Prostate gland (tissue), 2 donors: ENCODE measurements at regions of chr18 and their contacts with region 1.

Region 1: DNA sequence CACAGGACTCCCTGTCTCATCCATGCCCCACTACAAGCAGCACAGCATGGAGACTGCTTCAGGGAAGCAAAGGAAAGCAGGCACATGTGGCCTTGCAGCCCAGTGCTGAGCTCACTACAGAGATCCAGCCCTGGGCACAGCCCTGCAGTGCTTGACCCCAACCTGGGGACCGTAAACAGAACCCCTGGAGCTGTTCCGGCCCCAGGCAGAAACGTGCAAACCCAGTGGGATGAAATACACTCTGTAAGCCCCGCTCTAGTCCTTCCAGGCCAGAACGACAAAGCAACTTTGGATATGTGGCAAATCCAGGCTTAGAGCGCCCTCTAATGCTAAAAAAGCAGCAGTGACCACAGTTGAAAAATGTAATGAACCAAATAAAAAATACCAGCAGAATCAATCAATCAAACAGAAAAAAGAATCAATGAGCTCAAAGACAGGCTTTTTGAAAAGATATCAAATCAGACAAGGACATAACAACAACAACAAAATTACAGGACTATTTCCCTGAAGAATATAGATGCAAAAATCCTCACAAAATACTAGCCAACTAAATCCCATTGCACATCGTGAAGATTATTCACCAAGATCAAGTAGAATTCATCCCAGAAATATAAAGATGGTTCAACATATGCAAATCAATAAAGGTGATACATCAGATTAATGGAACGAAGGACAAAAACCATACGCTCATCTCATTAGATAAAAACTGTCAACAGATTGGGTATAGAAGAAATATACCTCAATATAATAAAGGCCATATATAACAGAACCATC is 45.6 kb downstream of the ZNF519 start:
- DNase-seq: no peak
- H3K4me3 ChIP-seq: no peak overlapping the region
- H3K27ac ChIP-seq: no peak overlapping the region
- H3K4me1 ChIP-seq: no peaks in the 10 kb centered on the region
- H3K27me3 ChIP-seq: no peaks in the 10 kb centered on the region
- CTCF ChIP-seq: peak; percentile 12 to 73 (median 59)
- POLR2A ChIP-seq: no peak

Region 2: GRCh38 chr18:13823707-13824395 is 262.8 kb before region 1 on chr18 and contains the start of gene MC5R:
- intact Hi-C with region 1: loop called (anchors 5 kb)
- DNase-seq: peak; percentile 30
- H3K4me3 ChIP-seq: peak within 1 kb of the TSS; percentile 17 to 31
- H3K27ac ChIP-seq: no peak within 1 kb of the TSS
- H3K4me1 ChIP-seq: no peaks in the 10 kb centered on the region
- H3K27me3 ChIP-seq: no peaks in the 10 kb centered on the region
- CTCF ChIP-seq: peak; percentile 62 to 95 (median 88)
- POLR2A ChIP-seq: no peak
- total RNA-seq, gene MC5R: not detected

Region 3: DNA sequence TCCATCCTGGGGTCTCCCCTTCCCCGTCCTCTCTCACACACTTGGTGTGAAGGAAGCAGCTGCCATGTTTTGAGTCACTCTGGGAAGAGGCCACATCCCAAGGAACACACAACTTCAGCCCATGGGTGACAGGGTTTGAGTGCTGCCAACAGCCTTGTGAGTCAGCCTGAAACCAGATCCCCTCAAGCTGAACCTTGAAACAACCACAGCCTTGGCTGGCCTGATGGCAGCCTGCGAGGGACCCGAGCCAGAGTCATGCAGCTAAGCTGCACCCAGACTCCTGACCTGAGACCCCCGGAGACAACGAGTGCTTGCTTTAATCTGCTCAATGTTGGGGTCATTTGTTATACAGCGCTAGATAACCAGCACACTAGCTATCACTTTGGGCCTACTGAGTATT is 152.0 kb before region 1 on chr18:
- intact Hi-C with region 1: no loop called
- DNase-seq: no peak
- H3K4me3 ChIP-seq: no peak overlapping the region
- H3K27ac ChIP-seq: no peak overlapping the region
- H3K4me1 ChIP-seq: no peaks in the 10 kb centered on the region
- H3K27me3 ChIP-seq: no peaks in the 10 kb centered on the region
- CTCF ChIP-seq: no peak
- POLR2A ChIP-seq: no peak

Region 4: DNA sequence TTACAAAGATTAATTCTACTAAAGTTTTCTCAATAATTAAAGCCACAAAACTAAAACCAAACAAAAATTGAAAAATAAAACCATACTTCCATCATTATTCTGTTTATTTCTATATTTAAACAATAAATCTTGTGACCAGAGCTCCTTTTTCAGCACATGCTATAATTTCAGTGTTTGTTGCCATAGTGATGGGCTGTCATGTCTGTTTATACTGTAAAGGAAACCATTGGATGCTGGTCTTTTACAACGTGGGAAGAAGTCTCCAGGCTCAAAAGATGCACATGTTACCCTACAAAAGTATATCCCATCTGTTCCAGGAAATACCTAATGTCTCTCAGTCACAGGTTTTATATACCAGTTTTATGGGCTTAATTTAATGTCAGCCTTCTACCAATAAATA is 71.2 kb before region 1 on chr18:
- intact Hi-C with region 1: no loop called
- DNase-seq: no peak
- H3K4me3 ChIP-seq: no peak overlapping the region
- H3K27ac ChIP-seq: no peak overlapping the region
- H3K4me1 ChIP-seq: no peaks in the 10 kb centered on the region
- H3K27me3 ChIP-seq: no peaks in the 10 kb centered on the region
- CTCF ChIP-seq: no peak
- POLR2A ChIP-seq: no peak